ENCODE measurements at regions of chr10 and their contacts with region 1.

Region 1: GRCh38 chr10:119270762-119271366 is 63.5 kb downstream of the GRK5 start:
- DNase-seq: peak; percentile 75
- ATAC-seq: peak; percentile 41 to 74 (median 57)
- H3K4me3 ChIP-seq: peak overlapping the region; percentile 1
- H3K4me3 Mint-ChIP-seq: peak overlapping the region; percentile 90
- H3K27ac ChIP-seq: peak overlapping the region; percentile 100
- H3K27ac Mint-ChIP-seq: peak overlapping the region; percentile 94 to 99
- H3K4me1 ChIP-seq: peaks cover 81% of the 10 kb centered on the region
- H3K4me1 Mint-ChIP-seq: peaks cover 75% of the 10 kb centered on the region in 2 donors
- H3K27me3 ChIP-seq: no peaks in the 10 kb centered on the region
- H3K27me3 Mint-ChIP-seq: no peaks in the 10 kb centered on the region
- CTCF ChIP-seq: no peak

Region 2: DNA sequence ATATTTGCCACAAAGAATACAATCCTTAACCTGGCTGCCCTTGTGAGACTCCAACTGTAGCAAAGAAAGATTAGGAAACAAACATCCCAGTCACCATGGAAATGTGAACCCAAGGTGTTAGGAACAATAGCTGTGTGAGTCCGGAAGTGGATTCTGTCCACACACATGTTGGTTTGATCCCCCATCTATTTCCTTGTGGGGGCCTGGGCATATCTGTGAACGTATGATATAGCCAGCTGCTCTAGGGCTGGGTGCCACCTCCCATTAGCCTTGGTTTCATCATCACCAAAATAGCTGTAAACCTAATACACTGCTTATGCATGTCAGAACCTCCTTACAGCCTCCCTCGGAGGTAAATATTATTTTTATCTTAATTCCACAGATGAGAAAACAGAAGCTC is 37.0 kb before region 1 on chr10:
- intact Hi-C with region 1: loop called (anchors 2 kb)
- DNase-seq: no peak
- ATAC-seq: peak; percentile 35 to 55 (median 51)
- H3K4me3 ChIP-seq: no peak overlapping the region
- H3K4me3 Mint-ChIP-seq: no peak overlapping the region
- H3K27ac ChIP-seq: no peak overlapping the region
- H3K27ac Mint-ChIP-seq: peak overlapping the region; percentile 74 to 81
- H3K4me1 ChIP-seq: peaks cover 20% of the 10 kb centered on the region
- H3K4me1 Mint-ChIP-seq: peaks cover 75 to 86% of the 10 kb centered on the region in 2 donors
- H3K27me3 ChIP-seq: no peaks in the 10 kb centered on the region
- H3K27me3 Mint-ChIP-seq: no peaks in the 10 kb centered on the region
- CTCF ChIP-seq: no peak

Region 3: GRCh38 chr10:119283818-119284217 is 13.0 kb after region 1 on chr10:
- intact Hi-C with region 1: loop called (anchors 2 kb)
- DNase-seq: peak in 1 of 2 donors; percentile 63
- ATAC-seq: peak in 2 of 3 donors; percentile 35 to 60
- H3K4me3 ChIP-seq: no peak overlapping the region
- H3K4me3 Mint-ChIP-seq: peak overlapping the region; percentile 52
- H3K27ac ChIP-seq: peak overlapping the region; percentile 21
- H3K27ac Mint-ChIP-seq: peak overlapping the region; percentile 69 to 94
- H3K4me1 ChIP-seq: peaks cover 33% of the 10 kb centered on the region
- H3K4me1 Mint-ChIP-seq: peaks cover 60 to 72% of the 10 kb centered on the region in 2 donors
- H3K27me3 ChIP-seq: no peaks in the 10 kb centered on the region
- H3K27me3 Mint-ChIP-seq: no peaks in the 10 kb centered on the region
- CTCF ChIP-seq: no peak

Region 4: DNA sequence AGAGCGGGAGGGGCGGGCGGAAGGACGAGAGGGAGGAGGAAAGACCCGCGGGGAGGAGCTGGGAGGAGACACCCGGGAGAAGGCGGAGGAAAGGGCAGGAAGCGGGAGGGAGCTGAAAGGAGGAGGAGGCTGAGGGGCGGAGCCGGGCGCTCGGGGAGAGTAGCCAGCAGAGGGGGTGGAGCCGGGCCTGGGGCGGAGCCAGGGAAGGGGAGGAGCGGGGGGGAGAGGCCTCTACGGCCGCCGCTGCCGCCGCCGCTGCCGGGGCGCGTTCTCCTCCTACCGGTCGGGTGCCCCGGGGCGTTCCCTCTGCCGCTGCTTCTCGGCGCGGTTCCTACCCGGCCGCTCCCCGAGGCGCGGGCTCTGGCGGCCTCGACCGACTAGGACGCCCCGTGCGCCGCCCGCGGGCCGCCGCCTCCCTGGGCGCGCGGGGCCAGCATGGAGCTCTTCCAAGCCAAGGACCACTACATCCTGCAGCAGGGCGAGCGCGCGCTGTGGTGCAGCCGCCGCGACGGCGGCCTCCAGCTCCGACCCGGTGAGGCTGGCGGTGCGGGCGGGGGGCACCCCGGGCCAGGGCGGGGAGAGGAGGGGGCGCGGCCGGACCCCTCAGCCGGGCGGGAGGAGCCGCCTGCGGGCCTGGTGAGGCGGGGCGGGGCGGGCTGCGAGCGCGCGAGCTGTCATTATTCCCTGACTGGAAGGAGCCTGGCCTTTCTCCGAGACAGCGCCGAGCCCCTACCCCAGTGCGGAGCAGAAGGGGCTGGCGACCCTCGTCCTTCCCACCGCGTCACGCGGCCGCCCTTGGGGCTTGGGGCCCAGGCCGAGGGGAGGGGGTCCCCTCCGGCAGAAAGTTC is 455.2 kb after region 1 on chr10 and contains the start of gene INPP5F:
- intact Hi-C with region 1: loop called (anchors 5 kb)
- DNase-seq: peak; percentile 91 to 98
- ATAC-seq: peak; percentile 93 to 98 (median 94)
- H3K4me3 ChIP-seq: peak within 1 kb of the TSS; percentile 45
- H3K4me3 Mint-ChIP-seq: peak within 1 kb of the TSS; percentile 92
- H3K27ac ChIP-seq: peak within 1 kb of the TSS; percentile 84
- H3K27ac Mint-ChIP-seq: peak within 1 kb of the TSS; percentile 24 to 80
- H3K4me1 ChIP-seq: peaks cover 18% of the 10 kb centered on the region
- H3K4me1 Mint-ChIP-seq: peaks cover 30 to 34% of the 10 kb centered on the region in 2 donors
- H3K27me3 ChIP-seq: no peaks in the 10 kb centered on the region
- H3K27me3 Mint-ChIP-seq: no peaks in the 10 kb centered on the region
- CTCF ChIP-seq: peak; percentile 17
- total RNA-seq, gene INPP5F: 12.8 to 18.2 (median 15.8) TPM